Pancreas (tissue), 10 donors: ENCODE measurements at regions of chr17 and their contacts with region 1.

Region 1: GRCh38 chr17:45828628-45829027 is 16.1 kb upstream of the SPPL2C start:
- DNase-seq: peak in 1 of 6 donors; percentile 21
- ATAC-seq: no peak
- H3K4me3 ChIP-seq: no peak overlapping the region
- H3K27ac ChIP-seq: no peak overlapping the region
- H3K4me1 ChIP-seq: no peaks in the 10 kb centered on the region
- H3K27me3 ChIP-seq: no peaks in the 10 kb centered on the region
- CTCF ChIP-seq: no peak

Region 2: GRCh38 chr17:45228763-45229539 is 599.7 kb before region 1 on chr17:
- intact Hi-C with region 1: loop called in 1 of 3 experiments (anchors 10 kb)
- DNase-seq: peak in 4 of 6 donors; percentile 49 to 79 (median 63)
- ATAC-seq: peak; percentile 33 to 71 (median 57)
- H3K4me3 ChIP-seq: peak overlapping the region in 1 of 4 donors; percentile 17
- H3K27ac ChIP-seq: peak overlapping the region in 3 of 4 donors; percentile 10 to 71 (median 64)
- H3K4me1 ChIP-seq: peaks cover 8 to 14% (median 11%) of the 10 kb centered on the region in 3 donors
- H3K27me3 ChIP-seq: no peaks in the 10 kb centered on the region
- CTCF ChIP-seq: no peak

Region 3: GRCh38 chr17:45640141-45640850 is 188.3 kb before region 1 on chr17:
- intact Hi-C with region 1: loop called (anchors 5 to 10 kb)
- DNase-seq: peak; percentile 48 to 82 (median 72)
- ATAC-seq: peak; percentile 75 to 96 (median 92)
- H3K4me3 ChIP-seq: no peak overlapping the region
- H3K27ac ChIP-seq: no peak overlapping the region
- H3K4me1 ChIP-seq: no peaks in the 10 kb centered on the region
- H3K27me3 ChIP-seq: peaks cover 0 to 3% (median 0%) of the 10 kb centered on the region in 4 donors
- CTCF ChIP-seq: peak; percentile 89 to 94 (median 92)

Region 4: DNA sequence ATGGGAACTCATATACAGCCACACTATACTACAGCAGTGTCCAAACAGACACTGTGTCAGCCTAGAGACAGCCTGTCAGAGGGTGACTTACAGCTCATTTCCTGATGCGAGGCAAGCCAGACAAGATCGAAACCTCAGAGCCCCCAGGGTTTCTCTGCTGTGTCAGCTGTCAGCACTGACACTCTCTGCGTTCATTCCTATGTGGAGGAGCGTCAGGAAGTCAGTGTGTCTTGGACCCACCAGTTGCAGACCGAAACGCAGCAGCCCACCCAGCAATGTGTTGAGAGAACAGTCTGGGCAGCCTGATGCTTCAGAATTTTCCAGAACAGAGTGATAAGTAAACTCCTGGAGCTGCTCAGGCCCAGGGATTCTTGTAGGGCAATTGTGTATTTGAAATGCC is 45.1 kb after region 1 on chr17:
- intact Hi-C with region 1: no loop called
- DNase-seq: no peak
- ATAC-seq: no peak
- H3K4me3 ChIP-seq: no peak overlapping the region
- H3K27ac ChIP-seq: no peak overlapping the region
- H3K4me1 ChIP-seq: no peaks in the 10 kb centered on the region
- H3K27me3 ChIP-seq: no peaks in the 10 kb centered on the region
- CTCF ChIP-seq: no peak

Region 5: GRCh38 chr17:46193626-46194392 is 365.2 kb after region 1 on chr17:
- intact Hi-C with region 1: no loop called
- DNase-seq: peak; percentile 95 to 99 (median 98)
- ATAC-seq: peak; percentile 85 to 93 (median 85)
- H3K4me3 ChIP-seq: peak overlapping the region; percentile 85 to 94 (median 88)
- H3K27ac ChIP-seq: peak overlapping the region; percentile 96 to 100 (median 99)
- H3K4me1 ChIP-seq: peaks cover 7 to 39% (median 39%) of the 10 kb centered on the region in 3 donors
- H3K27me3 ChIP-seq: no peaks in the 10 kb centered on the region
- CTCF ChIP-seq: peak in 1 of 4 donors; percentile 3